Caco-2 (cell line): ENCODE measurements at regions of chr22 and their contacts with region 1.

Region 1: DNA sequence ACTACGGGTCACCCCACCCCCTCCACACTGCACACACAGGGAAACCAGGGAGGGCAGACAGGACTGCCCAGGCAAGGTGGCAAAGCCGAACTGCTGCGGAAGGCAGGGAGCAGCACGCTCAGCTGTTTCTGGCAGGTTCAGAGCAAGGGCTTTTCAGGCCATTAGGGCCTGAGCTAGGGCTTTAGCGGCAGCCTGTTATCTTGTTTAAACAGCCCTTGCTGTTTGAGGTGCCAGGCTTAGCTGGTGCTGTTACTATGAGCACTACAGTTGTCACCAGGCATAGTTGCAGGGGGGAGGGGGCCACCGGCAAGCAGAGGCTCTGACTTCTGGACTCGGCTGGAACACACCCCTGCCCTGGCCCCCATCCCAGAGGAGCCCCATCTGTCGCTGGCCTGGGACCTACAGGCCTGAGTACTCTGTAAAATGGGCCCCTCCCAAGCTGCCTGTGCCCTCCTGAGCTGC is 34.9 kb downstream of the RSPH14 start:
- DNase-seq: peak in 1 of 2 experiments; percentile 23
- H3K4me3 ChIP-seq: no peak overlapping the region
- H3K4me3 Mint-ChIP-seq: no peak overlapping the region
- H3K27ac Mint-ChIP-seq: no peak overlapping the region
- H3K4me1 ChIP-seq: no peaks in the 10 kb centered on the region
- H3K4me1 Mint-ChIP-seq: no peaks in the 10 kb centered on the region
- H3K27me3 ChIP-seq: no peaks in the 10 kb centered on the region
- H3K27me3 Mint-ChIP-seq: no peaks in the 10 kb centered on the region
- CTCF ChIP-seq: no peak

Region 2: DNA sequence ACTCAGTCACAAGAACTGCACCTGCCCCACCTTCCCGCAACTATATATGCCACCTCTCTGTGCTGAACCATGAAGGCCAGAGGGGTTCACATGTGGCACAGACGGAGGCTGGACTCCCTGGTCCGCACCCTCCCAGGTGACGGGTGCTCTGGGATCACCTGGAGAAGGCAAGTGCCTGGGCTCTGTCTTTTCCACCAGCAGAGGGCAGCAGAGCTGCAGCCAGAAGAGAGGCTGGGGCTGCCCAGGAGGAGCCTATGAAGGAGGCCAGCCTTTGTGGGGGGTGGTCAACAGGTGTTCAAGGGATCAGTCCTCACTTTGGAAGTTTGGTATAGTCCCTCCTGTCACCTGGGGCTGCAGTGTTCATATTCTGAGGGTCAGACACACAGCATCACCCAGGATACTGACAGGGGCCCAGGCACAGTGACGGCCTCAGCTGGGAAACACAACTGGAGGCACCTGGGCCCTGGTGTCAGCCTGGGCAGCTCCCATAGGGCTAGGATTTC is 258.5 kb before region 1 on chr22:
- CTCF ChIA-PET with region 1: no interaction called
- POLR2A ChIA-PET with region 1: no interaction called
- intact Hi-C with region 1: loop called (anchors 10 kb)
- DNase-seq: peak; percentile 74 to 81
- H3K4me3 ChIP-seq: no peak overlapping the region
- H3K4me3 Mint-ChIP-seq: no peak overlapping the region
- H3K27ac Mint-ChIP-seq: no peak overlapping the region
- H3K4me1 ChIP-seq: no peaks in the 10 kb centered on the region
- H3K4me1 Mint-ChIP-seq: no peaks in the 10 kb centered on the region
- H3K27me3 ChIP-seq: no peaks in the 10 kb centered on the region
- H3K27me3 Mint-ChIP-seq: peaks cover under 1% of the 10 kb centered on the region
- CTCF ChIP-seq: peak; percentile 85 to 92

Region 3: DNA sequence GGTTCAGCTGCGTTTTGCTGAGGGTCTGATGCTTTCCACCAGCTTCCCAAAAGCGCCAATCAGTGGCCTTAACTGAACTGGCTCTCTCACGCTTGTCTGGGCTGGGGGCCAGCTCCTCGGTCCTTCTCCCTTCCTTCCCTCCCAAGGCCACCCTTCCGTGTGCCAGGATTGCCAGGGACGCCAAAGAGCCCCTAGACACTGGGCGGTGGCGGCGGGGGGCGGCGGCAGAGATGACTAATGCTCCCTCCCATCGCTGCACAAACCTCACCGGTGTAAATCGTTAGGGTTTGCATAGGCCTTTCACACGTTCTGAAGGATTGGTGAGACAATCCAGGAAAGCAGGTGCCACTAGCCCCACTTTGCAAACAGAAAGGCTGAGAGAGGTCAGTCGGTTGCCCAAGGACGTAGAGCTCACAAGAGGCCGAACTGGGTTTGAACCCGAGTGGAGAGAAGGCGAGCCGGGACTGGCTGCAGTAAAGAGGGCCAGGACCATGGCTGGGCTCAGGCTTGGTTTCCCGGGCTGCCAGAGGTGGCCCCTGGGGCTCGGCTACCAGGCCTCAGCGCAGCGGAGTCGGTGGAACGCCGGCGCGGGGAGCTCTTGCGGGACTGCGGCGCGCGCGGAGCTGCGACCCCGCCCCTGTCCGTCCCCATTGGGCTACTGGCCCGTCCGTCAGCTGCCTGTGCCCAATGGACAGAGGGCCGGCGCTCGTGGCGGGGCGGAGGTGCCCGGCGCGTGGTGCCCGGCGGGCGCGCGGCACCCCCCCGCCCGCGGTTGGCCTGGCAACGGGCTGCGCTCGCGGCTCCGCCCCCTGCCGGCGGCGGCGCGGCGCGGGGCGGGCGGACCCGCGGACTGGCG is 37.2 kb before region 1 on chr22:
- CTCF ChIA-PET with region 1: no interaction called
- POLR2A ChIA-PET with region 1: no interaction called
- intact Hi-C with region 1: no loop called
- DNase-seq: peak; percentile 90 to 94
- H3K4me3 ChIP-seq: peak overlapping the region; percentile 34
- H3K4me3 Mint-ChIP-seq: peak overlapping the region; percentile 74
- H3K27ac Mint-ChIP-seq: no peak overlapping the region
- H3K4me1 ChIP-seq: peaks cover 10% of the 10 kb centered on the region; the same call in 1 of the 2 replicates
- H3K4me1 Mint-ChIP-seq: peaks cover 8% of the 10 kb centered on the region
- H3K27me3 ChIP-seq: peaks cover 4% of the 10 kb centered on the region
- H3K27me3 Mint-ChIP-seq: peaks cover 15% of the 10 kb centered on the region
- CTCF ChIP-seq: no peak

Region 4: DNA sequence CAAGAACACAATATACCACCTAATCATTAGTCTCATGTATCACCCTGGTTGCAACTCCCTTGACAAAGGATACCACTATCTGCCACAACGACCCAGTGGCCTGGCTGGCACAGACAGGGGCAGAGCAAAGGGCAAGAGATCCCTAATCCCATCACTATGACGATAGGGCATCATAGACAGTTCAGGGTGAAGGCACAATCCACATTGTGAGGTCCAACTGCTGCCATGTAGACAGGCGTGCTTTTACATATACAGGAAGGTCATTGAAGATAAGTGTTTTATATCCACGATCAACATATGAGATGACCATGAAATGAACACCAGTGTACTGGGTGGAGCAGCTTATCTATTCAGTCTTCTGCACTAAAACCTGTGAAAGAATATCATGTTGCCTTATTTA is 378.6 kb after region 1 on chr22:
- CTCF ChIA-PET with region 1: no interaction called
- POLR2A ChIA-PET with region 1: no interaction called
- intact Hi-C with region 1: no loop called
- DNase-seq: no peak
- H3K4me3 ChIP-seq: no peak overlapping the region
- H3K4me3 Mint-ChIP-seq: no peak overlapping the region
- H3K27ac Mint-ChIP-seq: no peak overlapping the region
- H3K4me1 ChIP-seq: no peaks in the 10 kb centered on the region
- H3K4me1 Mint-ChIP-seq: no peaks in the 10 kb centered on the region
- H3K27me3 ChIP-seq: no peaks in the 10 kb centered on the region
- H3K27me3 Mint-ChIP-seq: no peaks in the 10 kb centered on the region
- CTCF ChIP-seq: no peak